Activated naive CD4-positive, alpha-beta T cell treated with anti-CD3 and anti-CD28 coated beads, Interleukin-2, amount 10 ng/mL, durations not matched to agents 7 days and 5 days (primary cell): ENCODE measurements at regions of chr6 and their contacts with region 1.

Region 1: DNA sequence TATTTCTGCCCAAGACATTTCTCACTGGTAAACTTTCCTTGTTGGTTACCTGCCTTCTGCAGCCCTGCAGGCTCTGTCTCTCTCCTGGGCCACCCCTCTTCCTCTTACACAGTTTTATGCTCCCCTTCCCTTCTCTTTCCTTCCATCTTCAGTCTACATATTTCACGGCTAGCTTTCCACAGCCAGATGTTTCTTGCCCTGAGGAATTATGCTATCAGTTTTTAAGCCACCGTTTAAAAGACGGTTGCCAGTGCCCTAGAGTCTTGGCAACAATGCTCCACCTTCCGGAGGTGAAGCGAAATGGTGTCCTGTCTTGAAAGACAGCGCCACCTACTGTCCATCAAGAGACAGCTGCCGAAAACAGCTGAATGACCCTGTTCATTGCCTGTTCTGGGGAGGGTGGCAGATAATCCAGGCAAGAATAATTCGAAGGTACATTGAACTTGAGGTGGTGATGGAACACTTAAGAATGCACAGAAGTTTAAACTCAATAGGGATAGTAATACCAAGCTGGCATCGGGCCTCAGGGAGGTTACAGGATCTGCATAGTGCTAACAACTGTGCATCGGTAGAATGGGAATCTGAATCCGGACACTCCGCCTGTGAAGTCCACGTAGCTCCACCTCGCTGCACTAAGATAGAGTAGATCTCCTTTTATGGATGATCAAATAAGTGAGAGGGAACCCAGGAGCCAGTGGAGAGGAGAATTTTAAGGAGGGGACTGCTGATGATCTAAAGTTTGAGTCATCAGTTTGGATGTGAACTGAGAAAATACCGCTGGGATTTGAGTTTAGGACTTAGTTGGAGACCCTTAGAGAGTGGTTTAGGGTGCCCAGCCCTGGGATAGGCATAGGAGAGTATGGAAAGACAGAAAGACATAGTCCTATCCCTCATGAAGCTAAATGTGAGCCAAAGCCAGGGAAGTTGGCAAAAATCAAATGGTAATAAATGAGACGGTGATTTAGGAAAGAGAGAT is 4.8 kb upstream of the TRIM40 start:
- DNase-seq: peak; percentile 75
- H3K4me3 Mint-ChIP-seq: no peak overlapping the region
- H3K27ac Mint-ChIP-seq: no peak overlapping the region
- H3K4me1 Mint-ChIP-seq: peaks cover 15% of the 10 kb centered on the region
- H3K27me3 Mint-ChIP-seq: peaks cover 80% of the 10 kb centered on the region

Region 2: DNA sequence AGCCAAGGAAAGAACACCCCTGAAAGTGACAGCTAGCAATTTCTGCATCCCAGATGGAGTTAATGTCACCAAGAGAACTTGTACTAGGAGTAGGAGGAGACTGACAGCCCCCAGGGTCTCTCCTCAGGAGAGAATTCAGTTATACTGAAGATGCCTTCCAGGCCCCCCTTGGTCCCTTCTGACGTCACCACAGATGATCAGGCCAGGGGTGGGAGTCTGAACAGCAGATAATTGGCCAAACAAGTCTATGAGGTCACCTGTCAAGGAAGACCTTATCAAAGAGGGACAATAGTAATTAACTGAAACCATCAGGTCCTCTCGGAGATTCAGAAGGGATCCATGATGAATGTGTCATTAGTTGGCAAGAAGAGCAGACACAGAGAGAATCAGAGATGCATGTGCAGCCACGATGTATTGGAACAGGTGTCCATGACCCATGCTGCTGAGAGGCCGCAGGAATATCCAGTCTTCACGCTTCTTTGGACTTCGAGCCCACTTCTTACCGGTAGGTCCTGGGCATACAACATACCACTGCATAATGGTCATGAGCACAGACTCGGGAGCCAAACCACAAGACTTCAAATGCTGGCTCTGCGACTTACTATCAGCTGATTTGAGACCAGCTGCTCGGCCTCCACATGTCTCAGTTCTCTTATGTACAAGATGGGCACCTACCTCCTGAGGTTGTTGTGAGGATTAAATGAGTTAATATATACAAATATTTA is 19.7 kb after region 1 on chr6:
- CTCF ChIA-PET with region 1: interaction called, 10 read pairs
- DNase-seq: no peak
- H3K4me3 Mint-ChIP-seq: no peak overlapping the region
- H3K27ac Mint-ChIP-seq: no peak overlapping the region
- H3K4me1 Mint-ChIP-seq: peaks cover 4% of the 10 kb centered on the region
- H3K27me3 Mint-ChIP-seq: peaks cover 63% of the 10 kb centered on the region

Region 3: DNA sequence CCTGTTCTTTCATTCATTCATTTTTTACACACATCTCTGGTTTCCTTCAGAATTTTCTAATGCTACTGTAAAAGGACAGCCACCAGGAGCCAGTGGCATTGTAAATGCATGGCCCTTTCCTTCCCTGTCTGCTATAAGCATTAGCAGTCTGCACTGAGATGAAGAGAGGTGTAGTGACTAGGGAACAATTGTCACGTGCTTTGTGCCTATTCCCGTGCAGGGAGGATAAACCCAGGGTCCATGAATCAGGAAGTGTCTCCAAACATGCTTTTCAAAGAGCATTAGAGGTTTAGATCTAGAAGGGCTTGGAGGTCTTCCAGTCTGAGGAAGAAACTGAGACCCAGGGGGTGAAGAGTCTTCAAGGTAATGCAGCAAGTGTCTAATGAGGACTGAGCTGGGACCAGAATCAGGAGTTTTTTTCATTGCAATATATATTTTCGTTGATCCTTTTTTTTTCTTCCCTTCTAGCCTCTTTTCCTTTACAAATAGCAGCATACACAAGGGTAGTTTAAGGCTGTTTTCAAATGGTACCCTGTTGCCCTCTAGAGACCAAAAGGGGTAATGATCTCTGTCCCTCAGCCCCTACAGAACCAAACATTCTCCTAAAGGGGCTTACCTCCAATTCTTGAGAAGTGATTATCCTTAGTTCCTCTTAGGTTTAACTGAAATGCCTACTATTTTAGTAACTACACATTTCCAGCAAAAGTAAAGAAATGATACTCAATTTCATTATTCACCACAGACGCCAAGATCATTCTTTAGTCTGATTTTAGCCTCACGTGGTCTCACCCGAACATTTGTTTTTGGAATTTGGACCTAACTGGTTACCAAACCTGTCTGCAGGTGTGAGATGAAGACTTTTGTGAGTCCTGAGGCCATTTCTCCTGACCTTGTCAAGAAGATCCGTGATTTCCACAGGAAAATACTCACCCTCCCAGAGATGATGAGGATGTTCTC is 38.8 kb after region 1 on chr6:
- CTCF ChIA-PET with region 1: interaction called, 17 read pairs
- DNase-seq: no peak
- H3K4me3 Mint-ChIP-seq: no peak overlapping the region
- H3K27ac Mint-ChIP-seq: no peak overlapping the region
- H3K4me1 Mint-ChIP-seq: peaks cover 21% of the 10 kb centered on the region
- H3K27me3 Mint-ChIP-seq: peaks cover 56% of the 10 kb centered on the region

Region 4: GRCh38 chr6:30349421-30350177 is 218.4 kb after region 1 on chr6:
- CTCF ChIA-PET with region 1: no interaction called
- DNase-seq: no peak
- H3K4me3 Mint-ChIP-seq: no peak overlapping the region
- H3K27ac Mint-ChIP-seq: no peak overlapping the region
- H3K4me1 Mint-ChIP-seq: peaks cover 25% of the 10 kb centered on the region
- H3K27me3 Mint-ChIP-seq: peaks cover 33% of the 10 kb centered on the region